ENCODE measurements at regions of chr7 and their contacts with region 1.

Region 1: GRCh38 chr7:4797858-4798705 is 22.7 kb downstream of the AP5Z1 start:
- DNase-seq: peak; percentile 64
- ATAC-seq: peak; percentile 65 to 71

Region 2: GRCh38 chr7:4479367-4480039 is 318.6 kb before region 1 on chr7:
- intact Hi-C with region 1: no loop called
- DNase-seq: no peak
- ATAC-seq: peak in 1 of 2 donors; percentile 38

Region 3: GRCh38 chr7:4883374-4884144 is 85.5 kb after region 1 on chr7 and contains the start of gene RADIL:
- intact Hi-C with region 1: loop called in 1 of 2 experiments (anchors 10 kb)
- DNase-seq: peak; percentile 96
- ATAC-seq: peak; percentile 93 to 98
- total RNA-seq, gene RADIL: 6.8 to 7.8 TPM

Measured in left cardiac atrium (tissue), 4 donors.